Vagina (tissue), 2 donors: ENCODE measurements at regions of chr10 and their contacts with region 1.

Region 1: DNA sequence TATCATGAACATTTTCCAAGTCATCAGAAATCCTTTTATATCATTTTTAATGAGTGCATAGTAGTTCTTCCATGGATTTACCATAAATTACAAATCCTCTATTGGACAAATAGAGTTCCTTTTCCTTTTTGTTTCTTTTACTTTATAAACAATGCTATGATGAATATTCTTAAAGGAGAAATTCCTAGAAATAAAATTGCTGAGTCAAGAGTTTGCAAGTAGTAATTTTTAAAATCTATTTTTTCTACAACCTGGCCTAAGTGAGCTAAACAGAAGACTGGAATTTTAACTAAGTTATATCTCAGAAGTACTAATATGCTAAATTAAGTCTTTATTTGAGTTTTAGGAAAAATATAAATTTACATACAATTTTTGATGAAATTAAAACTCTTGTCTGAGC is 38.8 kb downstream of the PLEKHA1 start:
- DNase-seq: no peak
- H3K4me3 ChIP-seq: no peak overlapping the region
- H3K27ac ChIP-seq: no peak overlapping the region
- H3K4me1 ChIP-seq: no peaks in the 10 kb centered on the region
- H3K27me3 ChIP-seq: no peaks in the 10 kb centered on the region
- CTCF ChIP-seq: no peak
- POLR2A ChIP-seq: no peak

Region 2: DNA sequence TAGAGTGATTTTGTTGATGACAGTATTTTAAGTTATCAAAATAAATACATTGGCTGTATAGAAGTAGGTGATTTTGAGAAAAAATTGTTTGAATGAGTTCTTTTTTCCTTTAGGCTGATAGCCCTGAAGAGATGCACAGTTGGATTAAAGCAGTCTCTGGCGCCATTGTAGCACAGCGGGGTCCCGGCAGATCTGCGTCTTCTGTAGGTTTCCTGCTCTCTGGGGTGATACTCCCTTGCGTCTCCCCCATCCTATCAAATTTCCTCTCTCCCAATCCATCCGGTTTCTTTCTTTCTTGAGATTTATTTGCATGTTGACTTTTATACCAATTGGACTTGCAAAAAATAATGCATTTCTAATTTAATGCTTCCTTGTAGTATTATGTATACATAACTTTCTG is 13.5 kb after region 1 on chr10:
- intact Hi-C with region 1: loop called (anchors 2 kb)
- DNase-seq: no peak
- H3K4me3 ChIP-seq: no peak overlapping the region
- H3K27ac ChIP-seq: no peak overlapping the region
- H3K4me1 ChIP-seq: no peaks in the 10 kb centered on the region
- H3K27me3 ChIP-seq: no peaks in the 10 kb centered on the region
- CTCF ChIP-seq: no peak
- POLR2A ChIP-seq: no peak